ENCODE measurements at regions of chr2 and their contacts with region 1.

Region 1: GRCh38 chr2:1769703-1770422 is 25.5 kb upstream of the PXDN start:
- DNase-seq: peak; percentile 95
- ATAC-seq: peak; percentile 79
- H3K4me3 Mint-ChIP-seq: no peak overlapping the region
- H3K27ac Mint-ChIP-seq: peak overlapping the region; percentile 78; the same call in 1 of the 2 replicates
- H3K4me1 Mint-ChIP-seq: peaks cover 42% of the 10 kb centered on the region
- H3K27me3 Mint-ChIP-seq: peaks cover 15% of the 10 kb centered on the region
- CTCF ChIP-seq: peak; percentile 93

Region 2: GRCh38 chr2:1550658-1551316 is 219.1 kb before region 1 on chr2:
- CTCF ChIA-PET with region 1: interaction called, 19 read pairs
- POLR2A ChIA-PET with region 1: no interaction called
- DNase-seq: peak; percentile 80
- ATAC-seq: peak; percentile 81
- H3K4me3 Mint-ChIP-seq: no peak overlapping the region
- H3K27ac Mint-ChIP-seq: no peak overlapping the region
- H3K4me1 Mint-ChIP-seq: 0 out of 2 replicates have a peak, but pooled peaks cover 5% of the 10 kb centered on the region
- H3K27me3 Mint-ChIP-seq: no peaks in the 10 kb centered on the region; the same call in none of the 2 replicates
- CTCF ChIP-seq: peak; percentile 98

Region 3: GRCh38 chr2:1685957-1686784 is 83.7 kb before region 1 on chr2:
- CTCF ChIA-PET with region 1: interaction called, 10 read pairs
- POLR2A ChIA-PET with region 1: no interaction called
- DNase-seq: peak; percentile 51
- ATAC-seq: peak; percentile 74
- H3K4me3 Mint-ChIP-seq: no peak overlapping the region
- H3K27ac Mint-ChIP-seq: peak overlapping the region; percentile 93
- H3K4me1 Mint-ChIP-seq: peaks cover 18% of the 10 kb centered on the region
- H3K27me3 Mint-ChIP-seq: no peaks in the 10 kb centered on the region
- CTCF ChIP-seq: no peak

Region 4: GRCh38 chr2:1758774-1759610 is 10.9 kb before region 1 on chr2:
- CTCF ChIA-PET with region 1: interaction called, 10 read pairs
- POLR2A ChIA-PET with region 1: no interaction called
- DNase-seq: no peak
- ATAC-seq: no peak
- H3K4me3 Mint-ChIP-seq: no peak overlapping the region
- H3K27ac Mint-ChIP-seq: no peak overlapping the region
- H3K4me1 Mint-ChIP-seq: no peaks in the 10 kb centered on the region
- H3K27me3 Mint-ChIP-seq: peaks cover 37% of the 10 kb centered on the region
- CTCF ChIP-seq: no peak

Region 5: GRCh38 chr2:1817256-1818051 is 47.6 kb after region 1 on chr2:
- CTCF ChIA-PET with region 1: interaction called, 23 read pairs
- POLR2A ChIA-PET with region 1: no interaction called
- DNase-seq: peak; percentile 86
- ATAC-seq: peak; percentile 89
- H3K4me3 Mint-ChIP-seq: no peak overlapping the region
- H3K27ac Mint-ChIP-seq: no peak overlapping the region
- H3K4me1 Mint-ChIP-seq: peaks cover 13% of the 10 kb centered on the region
- H3K27me3 Mint-ChIP-seq: peaks cover 5% of the 10 kb centered on the region
- CTCF ChIP-seq: peak; percentile 94

Region 6: GRCh38 chr2:1846041-1847015 is 76.5 kb after region 1 on chr2:
- CTCF ChIA-PET with region 1: no interaction called
- POLR2A ChIA-PET with region 1: no interaction called
- DNase-seq: no peak
- ATAC-seq: no peak
- H3K4me3 Mint-ChIP-seq: no peak overlapping the region
- H3K27ac Mint-ChIP-seq: no peak overlapping the region
- H3K4me1 Mint-ChIP-seq: peaks cover 38% of the 10 kb centered on the region
- H3K27me3 Mint-ChIP-seq: no peaks in the 10 kb centered on the region; the same call in none of the 2 replicates
- CTCF ChIP-seq: no peak

Measured in WTC11 (cell line).